ENCODE measurements at regions of chr5 and their contacts with region 1.

Region 1: GRCh38 chr5:181223058-181223728 is at the start of gene TRIM41:
- DNase-seq: peak; percentile 91 to 99 (median 98)
- ATAC-seq: peak; percentile 63 to 71
- H3K4me3 Mint-ChIP-seq: peak within 1 kb of the TSS; percentile 91 to 100 (median 98)
- H3K27ac Mint-ChIP-seq: peak within 1 kb of the TSS; percentile 97 to 100 (median 99)
- H3K4me1 Mint-ChIP-seq: peaks cover 34 to 71% (median 67%) of the 10 kb centered on the region in 4 donors
- H3K27me3 Mint-ChIP-seq: peaks cover 0 to 10% (median 0%) of the 10 kb centered on the region in 5 donors
- polyA plus RNA-seq, gene TRIM41: 1.1 to 2.6 (median 1.6) TPM

Region 2: GRCh38 chr5:181173420-181174342 is 49.5 kb before region 1 on chr5:
- POLR2A ChIA-PET with region 1: interaction called, 12 read pairs
- DNase-seq: peak in 8 of 10 donors; percentile 25 to 82 (median 70)
- ATAC-seq: peak; percentile 80 to 91
- H3K4me3 Mint-ChIP-seq: peak overlapping the region; percentile 79 to 100 (median 94)
- H3K27ac Mint-ChIP-seq: peak overlapping the region; percentile 10 to 94 (median 86)
- H3K4me1 Mint-ChIP-seq: peaks cover 15 to 39% (median 33%) of the 10 kb centered on the region in 4 donors
- H3K27me3 Mint-ChIP-seq: peaks cover 0 to 44% (median 8%) of the 10 kb centered on the region in 5 donors

Region 3: DNA sequence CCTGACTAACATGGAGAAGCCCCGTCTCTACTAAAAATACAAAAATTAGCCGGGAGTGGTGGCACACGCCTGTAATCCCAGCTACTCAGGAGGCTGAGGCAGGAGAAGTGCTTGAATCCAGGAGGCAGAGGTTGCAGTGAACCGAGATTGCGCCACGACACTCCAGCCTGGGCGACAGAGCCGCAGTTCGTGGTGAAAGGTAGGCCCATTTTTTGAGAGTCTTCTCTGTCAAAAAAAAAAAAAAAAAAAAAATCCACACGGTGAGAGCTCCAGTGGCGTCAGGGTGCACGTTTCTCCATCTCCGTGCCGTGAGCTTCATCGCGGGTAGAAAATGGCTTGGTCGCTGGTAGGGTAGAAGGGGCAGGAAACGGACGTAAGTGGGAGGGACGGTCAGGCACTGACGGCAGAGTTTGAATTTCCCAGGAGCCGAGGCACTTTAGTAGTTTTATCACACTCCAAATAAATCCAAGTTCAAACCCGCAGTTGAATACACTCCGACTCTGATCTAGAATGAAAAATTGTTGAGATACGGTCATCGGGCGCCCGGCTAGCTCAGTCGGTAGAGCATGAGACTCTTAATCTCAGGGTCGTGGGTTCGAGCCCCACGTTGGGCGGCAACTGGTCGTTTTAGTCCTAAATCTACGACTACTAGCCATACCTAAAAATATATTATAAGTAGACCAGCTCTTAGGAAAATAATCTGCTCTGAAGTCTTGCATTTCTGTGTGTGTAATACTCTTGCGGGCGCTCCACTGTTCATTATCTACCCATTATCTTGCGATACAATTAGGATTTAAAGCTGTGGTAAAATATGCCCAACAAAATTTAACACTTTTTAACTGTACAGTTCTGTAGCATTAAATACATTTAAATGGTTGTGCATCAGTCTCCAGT is 15.7 kb before region 1 on chr5:
- POLR2A ChIA-PET with region 1: interaction called, 92 read pairs
- DNase-seq: peak in 9 of 10 donors; percentile 54 to 88 (median 78)
- ATAC-seq: peak; percentile 59 to 74
- H3K4me3 Mint-ChIP-seq: peak overlapping the region; percentile 87 to 98 (median 93)
- H3K27ac Mint-ChIP-seq: peak overlapping the region; percentile 90 to 100 (median 92)
- H3K4me1 Mint-ChIP-seq: peaks cover 27 to 58% (median 34%) of the 10 kb centered on the region in 4 donors
- H3K27me3 Mint-ChIP-seq: peaks cover 4 to 20% (median 11%) of the 10 kb centered on the region in 5 donors

Region 4: DNA sequence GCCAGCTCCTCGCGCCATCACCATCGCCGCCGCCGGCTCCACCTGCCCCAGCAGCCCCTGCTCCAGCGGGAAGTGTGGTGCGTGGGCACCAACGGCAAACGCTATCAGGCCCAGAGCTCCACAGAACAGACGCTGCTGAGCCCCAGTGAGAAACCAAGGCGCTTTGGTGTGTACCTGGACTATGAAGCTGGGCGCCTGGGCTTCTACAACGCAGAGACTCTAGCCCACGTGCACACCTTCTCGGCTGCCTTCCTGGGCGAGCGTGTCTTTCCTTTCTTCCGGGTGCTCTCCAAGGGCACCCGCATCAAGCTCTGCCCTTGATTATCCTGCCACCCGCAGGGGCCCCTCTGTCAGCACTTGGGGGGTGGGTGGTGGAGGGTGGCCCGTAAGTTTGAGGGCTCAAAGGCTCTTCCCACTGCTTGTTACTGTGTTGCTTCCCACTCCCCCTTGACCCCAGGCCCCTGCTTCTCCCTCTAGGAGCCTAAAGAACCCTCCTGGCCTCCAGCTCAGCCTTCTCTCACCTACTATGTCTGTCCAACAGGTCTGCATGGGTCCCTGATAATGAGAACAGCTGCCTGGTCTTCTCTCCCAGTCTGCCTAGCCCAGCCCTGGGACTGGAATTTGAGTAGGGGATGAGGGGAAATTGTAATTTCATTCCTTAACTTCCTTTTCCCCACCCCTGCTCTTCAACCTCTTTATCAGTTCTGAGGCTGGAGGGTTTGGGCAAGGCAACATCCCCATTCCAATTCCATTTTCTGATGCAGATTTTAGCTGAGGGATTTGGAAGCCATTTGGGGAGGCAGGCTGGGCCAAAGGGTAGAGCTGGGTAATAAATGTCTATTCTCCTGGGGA is 11.5 kb after region 1 on chr5:
- POLR2A ChIA-PET with region 1: interaction called, 250 read pairs
- DNase-seq: no peak
- ATAC-seq: peak in 1 of 2 donors; percentile 13
- H3K4me3 Mint-ChIP-seq: no peak overlapping the region
- H3K27ac Mint-ChIP-seq: peak overlapping the region in 5 of 10 donors; percentile 57 to 69 (median 59)
- H3K4me1 Mint-ChIP-seq: peaks cover 15 to 44% (median 29%) of the 10 kb centered on the region in 4 donors
- H3K27me3 Mint-ChIP-seq: no peaks in the 10 kb centered on the region

Region 5: GRCh38 chr5:181243512-181244343 is 20.5 kb after region 1 on chr5 and contains the start of gene RACK1:
- POLR2A ChIA-PET with region 1: interaction called, 250 read pairs
- DNase-seq: peak; percentile 76 to 96 (median 89)
- ATAC-seq: peak; percentile 76 to 79
- H3K4me3 Mint-ChIP-seq: peak within 1 kb of the TSS; percentile 96 to 100 (median 99)
- H3K27ac Mint-ChIP-seq: peak within 1 kb of the TSS; percentile 94 to 99 (median 98)
- H3K4me1 Mint-ChIP-seq: peaks cover 35 to 78% (median 74%) of the 10 kb centered on the region in 4 donors
- H3K27me3 Mint-ChIP-seq: no peaks in the 10 kb centered on the region
- polyA plus RNA-seq, gene RACK1: 2,449 to 2,566 (median 2,565) TPM

Measured in naive thymus-derived CD8-positive, alpha-beta T cell (primary cell).